ENCODE measurements at regions of chr9 and their contacts with region 1.

Region 1: DNA sequence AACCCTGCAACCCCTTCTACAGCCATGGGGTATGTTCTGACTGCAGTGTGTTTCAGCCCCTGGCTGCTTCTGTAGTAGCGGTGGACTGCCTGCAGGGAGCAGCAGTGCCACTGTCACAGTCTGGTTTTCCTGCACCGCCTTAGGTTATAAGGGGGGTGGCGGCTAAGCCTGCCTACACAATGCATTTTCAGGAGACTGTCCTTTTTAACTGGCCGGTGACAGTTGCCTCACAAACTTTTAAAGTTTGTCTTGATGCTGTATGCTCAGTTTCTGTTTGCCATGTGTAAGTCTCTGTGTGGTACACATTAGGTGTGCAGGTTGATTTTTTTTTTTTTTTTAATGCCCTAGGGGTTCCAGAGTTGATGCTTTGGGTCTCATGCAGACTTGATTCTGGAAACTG is 53.0 kb downstream of the NUP214 start:
- DNase-seq: peak; percentile 60 to 86 (median 76)
- ATAC-seq: peak; percentile 99
- H3K4me3 Mint-ChIP-seq: no peak overlapping the region
- H3K27ac Mint-ChIP-seq: peak overlapping the region in 6 of 10 donors; percentile 12 to 68 (median 46)
- H3K4me1 Mint-ChIP-seq: peaks cover 6 to 28% (median 15%) of the 10 kb centered on the region in 4 donors
- H3K27me3 Mint-ChIP-seq: no peaks in the 10 kb centered on the region

Region 2: GRCh38 chr9:131037335-131038255 is 140.8 kb before region 1 on chr9:
- POLR2A ChIA-PET with region 1: no interaction called
- DNase-seq: no peak
- ATAC-seq: no peak
- H3K4me3 Mint-ChIP-seq: no peak overlapping the region
- H3K27ac Mint-ChIP-seq: no peak overlapping the region
- H3K4me1 Mint-ChIP-seq: peaks cover 0 to 4% (median 2%) of the 10 kb centered on the region in 4 donors
- H3K27me3 Mint-ChIP-seq: peaks cover 4 to 19% (median 18%) of the 10 kb centered on the region in 5 donors

Region 3: DNA sequence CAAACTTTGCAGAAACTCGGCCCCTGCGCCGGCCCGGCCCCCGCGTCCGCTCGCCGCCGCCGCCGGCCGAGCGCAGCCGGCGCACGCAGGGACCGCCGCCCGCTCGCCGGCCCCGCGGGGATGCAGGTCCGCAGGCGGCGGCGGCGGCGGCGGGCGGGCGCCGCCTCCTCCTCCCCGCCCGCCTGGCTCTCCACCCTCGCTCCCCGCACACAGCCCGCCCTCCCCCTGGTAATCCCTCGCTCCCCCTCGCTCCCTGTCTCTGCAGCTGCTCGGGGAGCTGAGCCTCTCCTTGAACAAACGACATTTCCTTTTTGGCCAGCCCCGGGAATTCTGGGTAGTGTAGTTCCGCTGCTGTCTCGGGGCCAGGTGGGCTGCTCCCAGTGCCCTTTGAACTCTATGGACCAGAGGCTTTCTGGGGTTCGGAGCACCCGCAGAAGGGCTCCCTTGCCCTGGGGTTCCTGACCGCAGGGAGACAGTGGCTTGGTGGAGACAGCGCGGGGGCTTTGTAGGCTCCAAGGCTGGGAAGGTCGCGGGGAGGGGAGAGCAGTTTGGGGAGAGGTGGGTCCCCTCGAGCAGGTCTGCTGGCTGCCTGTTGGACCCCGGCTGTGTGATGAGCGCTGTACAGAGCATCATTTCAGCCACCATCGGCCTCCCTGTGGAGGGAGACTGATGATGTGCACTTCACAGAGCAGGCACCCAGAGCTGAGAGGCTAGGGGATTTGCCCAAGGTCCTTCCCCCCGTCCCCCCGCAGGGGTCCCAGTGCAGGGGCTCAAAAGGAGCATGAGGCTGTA is 99.7 kb after region 1 on chr9:
- POLR2A ChIA-PET with region 1: interaction called, 10 read pairs
- DNase-seq: peak in 9 of 10 donors; percentile 50 to 85 (median 63)
- ATAC-seq: peak; percentile 47 to 52
- H3K4me3 Mint-ChIP-seq: peak overlapping the region; percentile 85 to 95 (median 90)
- H3K27ac Mint-ChIP-seq: peak overlapping the region; percentile 81 to 96 (median 94)
- H3K4me1 Mint-ChIP-seq: peaks cover 19 to 39% (median 27%) of the 10 kb centered on the region in 4 donors
- H3K27me3 Mint-ChIP-seq: peaks cover 0 to 7% (median 1%) of the 10 kb centered on the region in 5 donors